Body of pancreas (tissue), 4 donors: ENCODE measurements at regions of chr7 and their contacts with region 1.

Region 1: GRCh38 chr7:36881233-36881874 is 157.1 kb upstream of the AOAH start:
- DNase-seq: no peak
- ATAC-seq: no peak
- H3K4me3 ChIP-seq: no peak overlapping the region
- H3K27ac ChIP-seq: no peak overlapping the region
- H3K4me1 ChIP-seq: peaks cover 14% of the 10 kb centered on the region
- H3K27me3 ChIP-seq: no peaks in the 10 kb centered on the region
- CTCF ChIP-seq: no peak
- POLR2A ChIP-seq: no peak

Region 2: DNA sequence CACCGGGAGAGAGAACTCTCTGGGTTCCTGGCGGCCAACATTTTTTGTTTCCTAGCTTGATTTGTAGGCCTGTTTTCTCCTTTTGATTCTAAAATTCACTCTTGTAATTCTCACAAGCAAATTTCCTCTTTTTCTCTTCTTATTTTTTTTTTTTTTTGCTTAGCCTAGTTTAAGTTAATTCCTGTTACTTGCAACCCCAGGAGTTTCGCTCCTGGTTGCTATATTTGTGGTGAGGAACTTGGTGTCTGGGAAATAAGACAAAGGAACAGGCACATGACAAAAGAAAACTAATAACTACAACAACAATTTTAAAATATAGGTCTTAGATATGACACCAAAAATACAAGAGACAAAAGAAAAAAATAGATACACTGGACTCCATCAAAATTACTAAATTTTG is 163.8 kb before region 1 on chr7:
- intact Hi-C with region 1: no loop called
- DNase-seq: no peak
- ATAC-seq: no peak
- H3K4me3 ChIP-seq: no peak overlapping the region
- H3K27ac ChIP-seq: peak overlapping the region in 1 of 4 donors; percentile 63
- H3K4me1 ChIP-seq: peaks cover 11% of the 10 kb centered on the region
- H3K27me3 ChIP-seq: no peaks in the 10 kb centered on the region
- CTCF ChIP-seq: no peak
- POLR2A ChIP-seq: no peak

Region 3: GRCh38 chr7:36736899-36737211 is 144.5 kb before region 1 on chr7:
- intact Hi-C with region 1: no loop called
- DNase-seq: no peak
- ATAC-seq: no peak
- H3K4me3 ChIP-seq: no peak overlapping the region
- H3K27ac ChIP-seq: peak overlapping the region in 1 of 4 donors; percentile 67
- H3K4me1 ChIP-seq: no peaks in the 10 kb centered on the region
- H3K27me3 ChIP-seq: no peaks in the 10 kb centered on the region
- CTCF ChIP-seq: no peak
- POLR2A ChIP-seq: peak in 1 of 3 donors; percentile 31

Region 4: GRCh38 chr7:36820527-36821170 is 60.7 kb before region 1 on chr7:
- intact Hi-C with region 1: loop called (anchors 10 kb)
- DNase-seq: no peak
- ATAC-seq: no peak
- H3K4me3 ChIP-seq: no peak overlapping the region
- H3K27ac ChIP-seq: no peak overlapping the region
- H3K4me1 ChIP-seq: no peaks in the 10 kb centered on the region
- H3K27me3 ChIP-seq: no peaks in the 10 kb centered on the region
- CTCF ChIP-seq: no peak
- POLR2A ChIP-seq: no peak